CD8-positive, alpha-beta T cell (primary cell): ENCODE measurements at regions of chr17 and their contacts with region 1.

Region 1: DNA sequence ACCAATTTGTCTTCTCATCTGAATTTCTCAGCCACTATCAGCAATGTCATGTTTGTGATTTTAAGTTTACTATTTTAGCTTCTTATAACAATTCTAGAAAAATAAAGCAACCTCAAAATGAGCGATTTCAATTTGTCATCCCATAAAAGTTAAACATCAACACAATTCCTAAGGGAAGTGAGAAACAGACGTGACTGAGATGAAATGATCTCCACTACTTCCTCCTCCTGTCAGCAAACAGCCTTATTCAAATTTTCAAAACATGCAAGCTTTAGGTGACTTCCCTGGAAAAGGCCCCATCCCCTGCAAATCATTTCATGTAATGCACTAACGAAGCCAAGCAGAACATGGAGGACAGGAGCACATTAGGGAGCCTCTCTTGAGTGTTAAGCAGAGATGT is 64.9 kb downstream of the ZNF652 start:
- DNase-seq: no peak
- ATAC-seq: no peak
- H3K4me3 ChIP-seq: no peak overlapping the region
- H3K4me3 Mint-ChIP-seq: no peak overlapping the region
- H3K27ac ChIP-seq: no peak overlapping the region
- H3K27ac Mint-ChIP-seq: no peak overlapping the region
- H3K4me1 ChIP-seq: no peaks in the 10 kb centered on the region
- H3K4me1 Mint-ChIP-seq: no peaks in the 10 kb centered on the region
- H3K27me3 ChIP-seq: no peaks in the 10 kb centered on the region
- H3K27me3 Mint-ChIP-seq: no peaks in the 10 kb centered on the region
- CTCF ChIP-seq: no peak

Region 2: GRCh38 chr17:48704361-48705248 is 592.5 kb before region 1 on chr17:
- CTCF ChIA-PET with region 1: no interaction called
- POLR2A ChIA-PET with region 1: no interaction called
- intact Hi-C with region 1: loop called in 1 of 2 experiments (anchors 5 kb)
- DNase-seq: no peak
- ATAC-seq: no peak
- H3K4me3 ChIP-seq: no peak overlapping the region
- H3K4me3 Mint-ChIP-seq: no peak overlapping the region
- H3K27ac ChIP-seq: no peak overlapping the region
- H3K27ac Mint-ChIP-seq: no peak overlapping the region
- H3K4me1 ChIP-seq: no peaks in the 10 kb centered on the region
- H3K4me1 Mint-ChIP-seq: no peaks in the 10 kb centered on the region
- H3K27me3 ChIP-seq: peaks cover 0 to 3% of the 10 kb centered on the region in 2 experiments
- H3K27me3 Mint-ChIP-seq: peaks cover 61% of the 10 kb centered on the region
- CTCF ChIP-seq: no peak